Posterior vena cava (tissue), 2 donors: ENCODE measurements at regions of chr6 and their contacts with region 1.

Region 1: GRCh38 chr6:134599079-134599478 is 281.2 kb upstream of the SGK1 start:
- DNase-seq: no peak

Region 2: GRCh38 chr6:134128146-134128545 is 470.9 kb before region 1 on chr6:
- intact Hi-C with region 1: loop called in 1 of 2 experiments (anchors 5 kb)
- DNase-seq: no peak